ENCODE measurements at regions of chr3 and their contacts with region 1.

Region 1: GRCh38 chr3:160129459-160130061 is 95.7 kb upstream of the C3orf80 start:
- DNase-seq: no peak
- ATAC-seq: no peak
- H3K4me3 ChIP-seq: no peak overlapping the region
- H3K27ac ChIP-seq: no peak overlapping the region
- H3K4me1 ChIP-seq: no peaks in the 10 kb centered on the region
- H3K27me3 ChIP-seq: no peaks in the 10 kb centered on the region
- CTCF ChIP-seq: no peak
- EP300 ChIP-seq: no peak
- POLR2A ChIP-seq: no peak
- RAD21 ChIP-seq: no peak

Region 2: GRCh38 chr3:160038862-160039562 is 90.5 kb before region 1 on chr3:
- CTCF ChIA-PET with region 1: no interaction called
- POLR2A ChIA-PET with region 1: no interaction called
- in situ Hi-C with region 1: loop called (anchors 5 kb)
- intact Hi-C with region 1: no loop called
- DNase-seq: no peak
- ATAC-seq: peak; percentile 79
- H3K4me3 ChIP-seq: peak overlapping the region in 2 of 3 experiments; percentile 26 to 59; a peak in 3 of 6 replicates
- H3K27ac ChIP-seq: no peak overlapping the region
- H3K4me1 ChIP-seq: peaks cover 7% of the 10 kb centered on the region; the same call in 1 of the 2 replicates
- H3K27me3 ChIP-seq: peaks cover 3 to 22% of the 10 kb centered on the region in 2 experiments; a peak in 3 of 5 replicates
- CTCF ChIP-seq: 0 out of 2 replicates have a peak, but pooled peaks have one; percentile 10
- EP300 ChIP-seq: no peak
- POLR2A ChIP-seq: no peak
- RAD21 ChIP-seq: no peak

Region 3: DNA sequence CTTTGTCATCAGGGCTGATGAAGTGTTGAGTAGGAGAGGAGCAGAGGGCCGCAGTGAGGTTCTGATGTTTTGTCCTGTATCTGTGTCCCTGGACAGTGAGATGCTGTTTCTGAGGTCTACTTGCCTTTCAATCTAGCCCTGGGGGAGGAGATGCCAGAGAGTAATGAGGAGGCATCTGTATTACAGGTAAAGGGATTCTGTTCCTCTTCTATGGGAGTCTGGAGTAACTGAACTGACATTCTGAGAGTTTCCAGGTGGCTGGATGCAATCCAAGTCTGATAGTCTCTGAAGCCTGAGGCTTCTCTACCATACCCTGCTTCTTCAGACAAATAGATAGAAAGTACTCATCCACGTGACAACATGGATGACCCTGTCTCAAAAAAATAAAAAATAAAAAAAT is 80.0 kb before region 1 on chr3:
- CTCF ChIA-PET with region 1: no interaction called
- POLR2A ChIA-PET with region 1: no interaction called
- in situ Hi-C with region 1: no loop called
- intact Hi-C with region 1: loop called (anchors 5 kb)
- DNase-seq: no peak
- ATAC-seq: no peak
- H3K4me3 ChIP-seq: no peak overlapping the region
- H3K27ac ChIP-seq: no peak overlapping the region
- H3K4me1 ChIP-seq: peaks cover 32% of the 10 kb centered on the region
- H3K27me3 ChIP-seq: no peaks in the 10 kb centered on the region
- CTCF ChIP-seq: no peak
- EP300 ChIP-seq: no peak
- POLR2A ChIP-seq: no peak
- RAD21 ChIP-seq: no peak

Region 4: DNA sequence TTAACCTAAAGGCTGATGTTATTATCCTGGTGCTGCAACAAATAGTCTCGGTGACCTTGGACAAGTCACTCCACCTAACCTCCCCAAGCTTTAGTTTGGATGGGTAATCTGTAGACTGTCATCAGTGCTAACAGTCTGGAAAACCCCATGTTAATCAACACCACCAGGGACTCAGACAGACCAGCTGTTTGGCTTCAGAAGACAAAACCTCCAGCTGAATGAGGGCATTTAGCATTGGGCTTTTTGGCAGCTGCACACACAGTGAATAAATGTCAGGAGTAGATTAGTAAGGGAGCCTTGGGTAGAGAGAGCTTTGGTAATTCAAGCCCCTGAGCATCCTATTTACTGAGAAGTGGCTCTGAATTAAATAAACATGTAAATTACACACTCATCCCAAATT is 70.8 kb after region 1 on chr3:
- CTCF ChIA-PET with region 1: no interaction called
- POLR2A ChIA-PET with region 1: no interaction called
- in situ Hi-C with region 1: no loop called
- intact Hi-C with region 1: no loop called
- DNase-seq: no peak
- ATAC-seq: no peak
- H3K4me3 ChIP-seq: no peak overlapping the region
- H3K27ac ChIP-seq: no peak overlapping the region
- H3K4me1 ChIP-seq: no peaks in the 10 kb centered on the region
- H3K27me3 ChIP-seq: peaks cover 0 to 2% of the 10 kb centered on the region in 2 experiments; a peak in 2 of 5 replicates
- CTCF ChIP-seq: no peak
- EP300 ChIP-seq: no peak
- POLR2A ChIP-seq: no peak
- RAD21 ChIP-seq: no peak

Region 5: DNA sequence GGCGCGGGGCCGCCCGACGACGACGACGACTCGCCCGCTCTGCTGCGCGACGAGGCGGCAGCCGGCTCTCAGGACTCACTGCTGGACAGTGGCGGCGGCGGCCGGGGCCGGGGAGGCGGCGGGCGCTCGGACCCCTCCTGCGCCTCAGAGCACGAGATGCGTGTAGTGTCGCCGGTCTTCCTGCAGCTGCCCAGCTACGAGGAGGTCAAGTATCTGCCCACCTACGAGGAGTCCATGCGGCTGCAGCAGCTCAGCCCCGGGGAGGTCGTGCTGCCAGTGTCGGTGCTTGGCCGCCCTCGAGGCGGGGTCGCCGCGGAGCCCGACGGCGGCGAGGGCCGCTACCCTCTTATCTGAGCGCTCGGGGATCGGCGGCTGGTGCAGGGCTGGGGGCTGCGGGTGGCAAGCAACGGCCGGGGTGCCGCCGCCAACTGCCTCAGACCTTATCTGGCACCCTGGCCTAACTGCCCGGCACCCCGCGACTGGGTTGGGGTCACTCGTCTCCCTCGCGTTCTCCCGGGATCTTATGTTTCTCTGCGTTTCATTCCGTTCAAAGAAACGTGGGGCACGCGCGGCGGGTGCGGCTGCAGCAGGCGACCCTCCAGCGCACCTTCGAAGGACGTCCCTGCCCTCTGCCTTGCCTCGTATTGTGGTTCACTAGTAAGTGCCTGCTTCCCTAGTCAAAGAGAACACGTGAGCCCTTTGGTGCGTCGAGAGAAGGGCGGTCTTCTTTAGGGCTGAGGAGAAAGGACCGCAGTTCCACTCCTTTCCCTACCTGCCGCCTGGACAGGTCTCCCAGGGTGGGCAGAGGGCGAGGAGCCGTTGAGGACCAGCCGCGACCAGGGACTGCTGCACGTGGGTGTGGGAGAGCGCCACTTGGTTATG is 96.7 kb after region 1 on chr3:
- CTCF ChIA-PET with region 1: no interaction called
- POLR2A ChIA-PET with region 1: no interaction called
- in situ Hi-C with region 1: no loop called
- intact Hi-C with region 1: no loop called
- DNase-seq: no peak
- ATAC-seq: peak; percentile 62
- H3K4me3 ChIP-seq: peak overlapping the region; percentile 57 to 73 (median 59); a peak in 5 of 6 replicates
- H3K27ac ChIP-seq: no peak overlapping the region
- H3K4me1 ChIP-seq: peaks cover 13% of the 10 kb centered on the region
- H3K27me3 ChIP-seq: peaks cover 8 to 29% of the 10 kb centered on the region in 2 experiments
- CTCF ChIP-seq: no peak
- EP300 ChIP-seq: no peak
- POLR2A ChIP-seq: no peak
- RAD21 ChIP-seq: no peak

Measured in HepG2 (cell line).